Transverse colon (tissue), 4 donors: ENCODE measurements at regions of chr7 and their contacts with region 1.

Region 1: DNA sequence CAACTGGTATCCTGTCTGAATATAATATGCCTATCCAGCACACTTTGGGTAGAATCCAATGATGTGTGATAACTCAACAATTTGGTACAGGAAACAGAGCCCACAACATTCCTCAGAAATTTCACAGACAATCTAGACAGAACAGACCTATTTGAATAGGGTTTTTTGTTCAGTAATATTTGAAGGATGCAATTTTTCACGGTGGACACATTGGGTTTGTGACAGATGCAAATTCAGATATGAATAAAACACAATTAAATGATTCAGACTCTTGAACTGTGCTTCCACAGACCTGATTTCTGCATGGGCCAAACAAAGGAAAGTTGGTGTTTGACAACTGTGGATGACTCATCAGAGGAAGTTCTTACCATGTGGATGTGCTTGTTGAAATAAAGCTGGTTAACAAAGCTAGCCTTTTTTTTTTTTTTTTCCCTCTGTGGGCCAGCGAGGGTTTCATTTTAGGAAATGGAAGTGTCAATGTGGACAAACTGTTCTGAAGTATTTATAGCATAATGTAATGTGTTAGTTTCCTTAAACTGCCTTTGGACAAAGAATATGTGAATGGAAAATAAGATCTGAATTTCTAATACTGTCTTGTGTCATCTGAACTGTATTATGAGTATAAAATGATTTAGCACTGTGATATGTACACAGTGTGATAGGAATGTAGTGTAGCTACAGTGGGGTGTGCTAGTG is 43.2 kb upstream of the FAM133B start:
- DNase-seq: no peak
- H3K4me3 ChIP-seq: peak overlapping the region in 1 of 4 donors; percentile 1
- H3K27ac ChIP-seq: peak overlapping the region; percentile 71 to 78 (median 75)
- H3K4me1 ChIP-seq: peaks cover 21 to 51% (median 29%) of the 10 kb centered on the region in 4 donors
- H3K27me3 ChIP-seq: no peaks in the 10 kb centered on the region
- CTCF ChIP-seq: peak in 2 of 5 experiments; percentile 16 to 22
- EP300 ChIP-seq: no peak
- POLR2A ChIP-seq: no peak

Region 2: GRCh38 chr7:91424371-91424770 is 1209.0 kb before region 1 on chr7:
- in situ Hi-C with region 1: no loop called
- intact Hi-C with region 1: no loop called
- DNase-seq: no peak
- H3K4me3 ChIP-seq: no peak overlapping the region
- H3K27ac ChIP-seq: no peak overlapping the region
- H3K4me1 ChIP-seq: no peaks in the 10 kb centered on the region
- H3K27me3 ChIP-seq: no peaks in the 10 kb centered on the region
- CTCF ChIP-seq: no peak
- EP300 ChIP-seq: no peak
- POLR2A ChIP-seq: no peak

Region 3: GRCh38 chr7:92682903-92683539 is 49.7 kb after region 1 on chr7:
- in situ Hi-C with region 1: loop called in 1 of 4 experiments (anchors 10 kb)
- intact Hi-C with region 1: no loop called
- DNase-seq: no peak
- H3K4me3 ChIP-seq: no peak overlapping the region
- H3K27ac ChIP-seq: peak overlapping the region; percentile 5 to 19 (median 14)
- H3K4me1 ChIP-seq: peaks cover 14 to 28% (median 22%) of the 10 kb centered on the region in 4 donors
- H3K27me3 ChIP-seq: no peaks in the 10 kb centered on the region
- CTCF ChIP-seq: no peak
- EP300 ChIP-seq: no peak
- POLR2A ChIP-seq: no peak